ENCODE measurements at regions of chr3 and their contacts with region 1.

Region 1: GRCh38 chr3:195850857-195851543 is 39.3 kb upstream of the MUC4 start:
- DNase-seq: peak; percentile 94
- ATAC-seq: peak; percentile 90
- H3K4me3 Mint-ChIP-seq: no peak overlapping the region
- H3K27ac Mint-ChIP-seq: no peak overlapping the region
- H3K4me1 Mint-ChIP-seq: peaks cover 20% of the 10 kb centered on the region
- H3K27me3 Mint-ChIP-seq: peaks cover 6% of the 10 kb centered on the region

Region 2: GRCh38 chr3:195806211-195806915 is 44.6 kb before region 1 on chr3:
- CTCF ChIA-PET with region 1: interaction called, 10 read pairs
- DNase-seq: no peak
- ATAC-seq: no peak
- H3K4me3 Mint-ChIP-seq: no peak overlapping the region
- H3K27ac Mint-ChIP-seq: peak overlapping the region; percentile 51
- H3K4me1 Mint-ChIP-seq: peaks cover 61% of the 10 kb centered on the region
- H3K27me3 Mint-ChIP-seq: peaks cover 18% of the 10 kb centered on the region

Region 3: GRCh38 chr3:195863121-195864006 is 12.4 kb after region 1 on chr3:
- CTCF ChIA-PET with region 1: interaction called, 24 read pairs
- DNase-seq: peak; percentile 72
- ATAC-seq: peak; percentile 72
- H3K4me3 Mint-ChIP-seq: no peak overlapping the region
- H3K27ac Mint-ChIP-seq: no peak overlapping the region
- H3K4me1 Mint-ChIP-seq: peaks cover 4% of the 10 kb centered on the region
- H3K27me3 Mint-ChIP-seq: no peaks in the 10 kb centered on the region

Region 4: DNA sequence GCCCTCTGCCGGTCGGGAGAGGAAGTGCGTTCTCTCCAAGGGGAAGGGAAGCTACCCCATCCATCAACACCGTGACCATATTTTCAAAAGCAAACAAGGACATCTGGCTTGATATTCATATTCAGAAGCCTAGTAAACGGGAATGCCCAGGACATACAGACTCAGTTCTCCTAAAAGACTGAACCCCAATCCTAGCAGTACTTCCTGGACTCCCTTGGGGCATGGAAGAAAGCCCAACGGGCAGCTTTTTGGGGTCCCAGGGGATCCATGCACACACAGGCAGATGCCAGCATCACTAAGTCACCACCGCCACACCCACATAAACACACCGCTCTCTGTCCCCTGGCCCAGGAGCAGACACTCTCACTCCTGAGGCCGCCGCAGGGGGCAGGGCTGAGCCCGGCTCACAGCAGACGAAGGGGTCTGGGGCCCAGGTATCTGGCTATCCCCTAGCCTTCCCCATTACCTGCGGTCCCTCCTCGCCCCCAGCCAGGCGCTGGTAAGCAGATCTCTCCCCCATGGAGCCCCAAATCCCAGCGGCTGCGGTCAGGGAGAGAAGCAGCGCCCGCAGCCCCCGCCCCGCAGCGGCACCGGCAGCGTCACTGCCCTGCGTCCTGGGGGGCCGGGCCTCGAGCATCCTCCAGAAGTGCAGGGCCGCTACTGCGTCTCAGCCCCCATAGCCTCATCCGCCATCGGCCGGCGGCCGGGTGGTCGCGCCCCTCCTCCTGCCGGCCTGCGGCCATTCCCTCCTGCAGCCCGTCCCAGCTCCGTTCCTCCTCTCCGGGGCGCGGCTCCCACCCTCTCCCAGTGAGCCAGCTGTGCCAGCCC is 44.0 kb after region 1 on chr3:
- CTCF ChIA-PET with region 1: interaction called, 192 read pairs
- DNase-seq: peak; percentile 82
- ATAC-seq: peak; percentile 77
- H3K4me3 Mint-ChIP-seq: peak overlapping the region; percentile 81
- H3K27ac Mint-ChIP-seq: peak overlapping the region; percentile 87
- H3K4me1 Mint-ChIP-seq: peaks cover 40% of the 10 kb centered on the region
- H3K27me3 Mint-ChIP-seq: no peaks in the 10 kb centered on the region